ENCODE measurements at regions of chr7 and their contacts with region 1.

Region 1: GRCh38 chr7:24381894-24382505 is 98.0 kb downstream of the NPY start:
- DNase-seq: peak; percentile 38
- ATAC-seq: peak; percentile 51
- H3K4me3 ChIP-seq: no peak overlapping the region
- H3K4me3 Mint-ChIP-seq: no peak overlapping the region
- H3K27ac ChIP-seq: no peak overlapping the region
- H3K27ac Mint-ChIP-seq: no peak overlapping the region
- H3K4me1 ChIP-seq: no peaks in the 10 kb centered on the region
- H3K4me1 Mint-ChIP-seq: no peaks in the 10 kb centered on the region
- H3K27me3 ChIP-seq: no peaks in the 10 kb centered on the region
- H3K27me3 Mint-ChIP-seq: peaks cover 9% of the 10 kb centered on the region
- CTCF ChIP-seq: peak; percentile 32

Region 2: DNA sequence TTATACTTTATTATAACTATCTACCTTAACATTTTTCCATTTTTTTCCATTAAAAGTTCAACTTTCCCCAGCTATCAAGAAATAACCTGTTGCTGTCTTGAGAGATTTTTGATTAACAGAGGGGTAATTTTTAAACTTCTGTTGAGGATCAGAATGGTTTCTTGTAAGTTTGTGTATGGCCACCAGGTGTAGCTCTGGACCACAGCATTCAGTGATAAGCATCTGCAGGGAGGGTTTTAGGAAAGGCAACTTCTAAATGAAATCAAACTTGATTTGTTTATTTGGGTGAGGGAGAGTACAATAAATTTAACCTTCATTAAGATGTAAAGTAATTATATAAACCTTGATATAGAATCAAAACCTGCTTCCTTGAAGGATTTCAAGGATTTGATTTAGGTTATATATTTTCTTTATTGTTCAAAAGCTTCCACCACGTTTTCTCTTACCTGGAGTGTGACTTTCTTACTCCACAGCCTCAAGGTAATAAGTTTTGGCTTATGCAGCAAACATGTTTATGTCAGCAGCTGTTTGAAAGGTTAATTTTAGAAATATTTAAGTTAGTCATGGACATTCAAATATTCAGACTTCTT is 518.7 kb before region 1 on chr7:
- CTCF ChIA-PET with region 1: interaction called, 4 read pairs
- POLR2A ChIA-PET with region 1: no interaction called
- intact Hi-C with region 1: loop called (anchors 10 kb)
- DNase-seq: peak; percentile 7
- ATAC-seq: no peak
- H3K4me3 ChIP-seq: no peak overlapping the region
- H3K4me3 Mint-ChIP-seq: no peak overlapping the region
- H3K27ac ChIP-seq: no peak overlapping the region
- H3K27ac Mint-ChIP-seq: no peak overlapping the region
- H3K4me1 ChIP-seq: no peaks in the 10 kb centered on the region
- H3K4me1 Mint-ChIP-seq: no peaks in the 10 kb centered on the region
- H3K27me3 ChIP-seq: no peaks in the 10 kb centered on the region
- H3K27me3 Mint-ChIP-seq: peaks cover 6% of the 10 kb centered on the region
- CTCF ChIP-seq: peak; percentile 42

Region 3: DNA sequence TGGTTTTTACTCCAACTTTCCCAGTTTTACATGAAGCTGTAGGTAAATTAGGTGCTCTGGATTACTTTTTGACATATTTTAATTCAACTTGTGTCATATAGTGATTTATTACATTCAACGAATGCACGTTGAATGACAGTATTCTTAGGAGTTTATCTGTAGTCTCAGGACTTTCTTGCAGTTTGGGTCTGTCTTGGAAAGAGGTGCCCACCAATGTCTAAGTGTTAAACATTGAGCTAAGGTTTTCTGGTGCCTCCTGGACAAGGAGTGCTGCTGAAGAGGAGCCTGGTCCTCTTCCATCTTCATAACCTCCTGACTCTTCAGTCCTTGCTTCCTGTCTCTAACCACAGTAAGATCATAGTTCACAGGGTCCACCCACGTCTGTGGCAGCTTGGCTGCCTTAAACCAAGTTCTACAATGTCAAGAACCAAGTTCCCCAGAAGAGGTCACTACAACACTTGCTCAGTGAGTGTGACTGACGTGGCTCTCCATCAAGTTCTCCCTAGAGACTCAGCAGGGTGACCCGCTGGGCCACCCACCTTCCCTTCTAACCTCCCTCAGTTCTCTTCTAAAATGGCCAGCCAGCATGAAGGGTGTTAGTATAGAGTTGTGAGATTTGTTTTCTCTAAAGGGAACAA is 91.9 kb before region 1 on chr7:
- CTCF ChIA-PET with region 1: interaction called, 22 read pairs
- POLR2A ChIA-PET with region 1: no interaction called
- intact Hi-C with region 1: loop called (anchors 1 kb)
- DNase-seq: peak; percentile 64
- ATAC-seq: peak; percentile 86
- H3K4me3 ChIP-seq: no peak overlapping the region
- H3K4me3 Mint-ChIP-seq: no peak overlapping the region
- H3K27ac ChIP-seq: no peak overlapping the region
- H3K27ac Mint-ChIP-seq: no peak overlapping the region
- H3K4me1 ChIP-seq: peaks cover 8 to 10% of the 10 kb centered on the region in 2 donors
- H3K4me1 Mint-ChIP-seq: peaks cover 12% of the 10 kb centered on the region
- H3K27me3 ChIP-seq: peaks cover 0 to 19% (median 12%) of the 10 kb centered on the region in 4 experiments
- H3K27me3 Mint-ChIP-seq: peaks cover 40% of the 10 kb centered on the region
- CTCF ChIP-seq: peak; percentile 41

Region 4: DNA sequence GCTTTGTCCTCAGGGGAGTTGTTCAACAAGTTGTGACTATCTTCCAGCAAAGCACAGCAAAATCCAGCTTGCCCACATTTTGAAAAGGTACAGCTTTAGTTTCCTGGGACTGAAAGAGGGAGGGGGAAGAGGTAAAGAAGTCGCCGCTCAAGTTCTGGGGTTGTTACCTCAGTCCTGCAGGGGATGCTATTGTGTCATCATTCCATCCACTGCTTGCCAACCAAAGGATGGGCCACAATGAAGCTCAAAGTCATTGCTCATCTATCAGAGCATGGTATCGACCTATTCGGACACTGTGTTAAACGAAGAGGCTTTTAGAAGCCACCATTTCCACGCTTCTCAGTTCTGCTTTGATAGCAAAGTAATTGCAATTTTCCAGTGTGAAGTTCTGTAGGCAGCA is 63.7 kb before region 1 on chr7:
- CTCF ChIA-PET with region 1: interaction called, 30 read pairs
- POLR2A ChIA-PET with region 1: no interaction called
- intact Hi-C with region 1: loop called (anchors 1 kb)
- DNase-seq: peak; percentile 25
- ATAC-seq: no peak
- H3K4me3 ChIP-seq: no peak overlapping the region
- H3K4me3 Mint-ChIP-seq: no peak overlapping the region
- H3K27ac ChIP-seq: no peak overlapping the region
- H3K27ac Mint-ChIP-seq: no peak overlapping the region
- H3K4me1 ChIP-seq: no peaks in the 10 kb centered on the region
- H3K4me1 Mint-ChIP-seq: no peaks in the 10 kb centered on the region
- H3K27me3 ChIP-seq: no peaks in the 10 kb centered on the region
- H3K27me3 Mint-ChIP-seq: peaks cover 16% of the 10 kb centered on the region
- CTCF ChIP-seq: no peak

Region 5: GRCh38 chr7:24494832-24495231 is 112.8 kb after region 1 on chr7:
- CTCF ChIA-PET with region 1: no interaction called
- POLR2A ChIA-PET with region 1: no interaction called
- intact Hi-C with region 1: no loop called
- DNase-seq: no peak
- ATAC-seq: no peak
- H3K4me3 ChIP-seq: no peak overlapping the region
- H3K4me3 Mint-ChIP-seq: no peak overlapping the region
- H3K27ac ChIP-seq: no peak overlapping the region
- H3K27ac Mint-ChIP-seq: no peak overlapping the region
- H3K4me1 ChIP-seq: no peaks in the 10 kb centered on the region
- H3K4me1 Mint-ChIP-seq: no peaks in the 10 kb centered on the region
- H3K27me3 ChIP-seq: peaks cover 0 to 5% (median 2%) of the 10 kb centered on the region in 4 experiments
- H3K27me3 Mint-ChIP-seq: peaks cover 33% of the 10 kb centered on the region
- CTCF ChIP-seq: no peak

Measured in B cell (primary cell).